ENCODE measurements at regions of chr7 and their contacts with region 1.

Region 1: GRCh38 chr7:116929914-116930913 is 23.1 kb upstream of the ST7 start:
- DNase-seq: peak; percentile 82
- ATAC-seq: peak; percentile 99
- H3K4me3 ChIP-seq: no peak overlapping the region
- H3K27ac ChIP-seq: no peak overlapping the region
- H3K4me1 ChIP-seq: no peaks in the 10 kb centered on the region
- H3K27me3 ChIP-seq: no peaks in the 10 kb centered on the region
- CTCF ChIP-seq: peak; percentile 92
- POLR2A ChIP-seq: 0 out of 2 replicates have a peak, but pooled peaks have one; percentile 30
- RAD21 ChIP-seq: peak; percentile 94

Region 2: DNA sequence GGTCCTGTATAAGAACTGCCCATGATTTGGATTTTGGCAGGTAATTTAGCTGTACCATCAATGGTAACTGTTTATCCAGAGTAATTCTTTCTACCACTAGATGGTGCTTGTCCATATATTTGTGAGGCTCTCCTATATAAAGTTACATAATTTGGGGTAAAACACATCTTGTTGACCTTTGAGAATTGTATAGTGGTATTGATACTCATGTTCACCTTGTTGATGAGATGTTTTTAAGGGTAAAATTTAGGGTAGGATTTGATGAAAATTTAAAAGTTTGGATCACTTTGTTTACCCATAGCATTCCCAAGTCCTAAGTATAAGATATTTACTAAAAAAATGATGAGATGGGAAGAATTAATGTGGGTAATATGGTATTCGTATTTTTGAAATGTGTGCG is 54.7 kb after region 1 on chr7:
- CTCF ChIA-PET with region 1: no interaction called
- POLR2A ChIA-PET with region 1: no interaction called
- dilution Hi-C with region 1: no loop called
- in situ Hi-C with region 1: no loop called
- intact Hi-C with region 1: loop called (anchors 2 kb)
- DNase-seq: peak; percentile 28
- ATAC-seq: peak; percentile 52
- H3K4me3 ChIP-seq: no peak overlapping the region
- H3K27ac ChIP-seq: no peak overlapping the region
- H3K4me1 ChIP-seq: peaks cover 2% of the 10 kb centered on the region
- H3K27me3 ChIP-seq: no peaks in the 10 kb centered on the region
- CTCF ChIP-seq: peak; percentile 66
- POLR2A ChIP-seq: no peak
- RAD21 ChIP-seq: peak; percentile 59

Region 3: GRCh38 chr7:117119192-117119924 is 189.1 kb after region 1 on chr7:
- CTCF ChIA-PET with region 1: interaction called, 3 read pairs
- POLR2A ChIA-PET with region 1: no interaction called
- dilution Hi-C with region 1: no loop called
- in situ Hi-C with region 1: loop called (anchors 5 kb)
- intact Hi-C with region 1: loop called (anchors 1 kb)
- DNase-seq: peak; percentile 81
- ATAC-seq: peak; percentile 75
- H3K4me3 ChIP-seq: no peak overlapping the region
- H3K27ac ChIP-seq: no peak overlapping the region
- H3K4me1 ChIP-seq: peaks cover 3% of the 10 kb centered on the region
- H3K27me3 ChIP-seq: no peaks in the 10 kb centered on the region
- CTCF ChIP-seq: peak; percentile 93
- POLR2A ChIP-seq: 0 out of 2 replicates have a peak, but pooled peaks have one; percentile 37
- RAD21 ChIP-seq: peak; percentile 95

Region 4: GRCh38 chr7:117127585-117128168 is 197.5 kb after region 1 on chr7:
- CTCF ChIA-PET with region 1: interaction called, 3 read pairs
- POLR2A ChIA-PET with region 1: no interaction called
- dilution Hi-C with region 1: no loop called
- in situ Hi-C with region 1: no loop called
- intact Hi-C with region 1: loop called (anchors 1 kb)
- DNase-seq: peak; percentile 72
- ATAC-seq: no peak
- H3K4me3 ChIP-seq: no peak overlapping the region
- H3K27ac ChIP-seq: no peak overlapping the region
- H3K4me1 ChIP-seq: peaks cover 12% of the 10 kb centered on the region
- H3K27me3 ChIP-seq: no peaks in the 10 kb centered on the region
- CTCF ChIP-seq: peak; percentile 75
- POLR2A ChIP-seq: no peak
- RAD21 ChIP-seq: peak; percentile 59

Region 5: DNA sequence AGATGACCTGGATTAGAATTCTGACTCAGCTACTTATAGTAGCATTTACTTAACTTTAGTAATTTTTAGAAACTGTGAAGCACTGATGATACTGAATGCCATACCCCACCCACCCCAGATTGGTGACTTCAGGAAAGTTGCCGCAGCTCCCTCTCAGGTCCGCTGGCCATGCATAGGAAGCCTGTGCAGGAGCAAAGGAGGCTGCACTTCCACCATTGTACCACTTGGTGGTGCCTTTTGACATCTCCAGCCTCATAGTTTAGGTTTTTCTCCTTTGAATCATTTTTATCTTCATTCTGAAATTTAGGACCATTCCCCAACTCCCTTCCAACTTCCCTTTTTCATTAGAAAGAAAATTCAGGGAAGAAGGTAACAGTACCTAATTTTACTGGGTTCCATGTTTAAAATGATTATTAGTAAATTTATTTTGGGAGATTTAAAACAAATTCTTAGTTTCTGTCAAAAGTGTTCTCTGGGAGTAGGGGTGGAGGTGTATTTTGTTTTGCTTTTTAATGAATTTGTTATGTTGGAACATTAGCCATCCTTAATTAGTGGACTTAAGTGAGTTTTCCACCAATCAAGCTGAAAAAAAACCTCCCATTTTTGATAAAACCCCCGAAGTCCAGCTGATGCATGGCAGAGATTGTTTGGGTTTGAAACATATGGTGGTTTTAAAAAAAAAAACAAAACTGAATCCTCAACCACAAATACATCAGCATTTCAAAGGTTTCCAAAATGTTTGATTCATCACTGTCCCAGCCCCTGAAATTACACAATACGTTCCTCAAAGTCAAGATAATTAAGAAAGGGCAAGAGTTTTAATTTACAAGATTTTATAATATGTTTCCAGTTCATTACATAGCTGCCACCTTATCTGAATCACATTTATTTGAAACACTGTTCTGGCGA is 283.0 kb after region 1 on chr7:
- CTCF ChIA-PET with region 1: no interaction called
- POLR2A ChIA-PET with region 1: no interaction called
- dilution Hi-C with region 1: no loop called
- in situ Hi-C with region 1: no loop called
- intact Hi-C with region 1: loop called (anchors 5 kb)
- DNase-seq: peak; percentile 75
- ATAC-seq: peak; percentile 84
- H3K4me3 ChIP-seq: no peak overlapping the region
- H3K27ac ChIP-seq: peak overlapping the region; percentile 60; the same call in 1 of the 2 replicates
- H3K4me1 ChIP-seq: peaks cover 5% of the 10 kb centered on the region
- H3K27me3 ChIP-seq: no peaks in the 10 kb centered on the region
- CTCF ChIP-seq: peak; percentile 91
- POLR2A ChIP-seq: no peak
- RAD21 ChIP-seq: peak; percentile 88

Region 6: DNA sequence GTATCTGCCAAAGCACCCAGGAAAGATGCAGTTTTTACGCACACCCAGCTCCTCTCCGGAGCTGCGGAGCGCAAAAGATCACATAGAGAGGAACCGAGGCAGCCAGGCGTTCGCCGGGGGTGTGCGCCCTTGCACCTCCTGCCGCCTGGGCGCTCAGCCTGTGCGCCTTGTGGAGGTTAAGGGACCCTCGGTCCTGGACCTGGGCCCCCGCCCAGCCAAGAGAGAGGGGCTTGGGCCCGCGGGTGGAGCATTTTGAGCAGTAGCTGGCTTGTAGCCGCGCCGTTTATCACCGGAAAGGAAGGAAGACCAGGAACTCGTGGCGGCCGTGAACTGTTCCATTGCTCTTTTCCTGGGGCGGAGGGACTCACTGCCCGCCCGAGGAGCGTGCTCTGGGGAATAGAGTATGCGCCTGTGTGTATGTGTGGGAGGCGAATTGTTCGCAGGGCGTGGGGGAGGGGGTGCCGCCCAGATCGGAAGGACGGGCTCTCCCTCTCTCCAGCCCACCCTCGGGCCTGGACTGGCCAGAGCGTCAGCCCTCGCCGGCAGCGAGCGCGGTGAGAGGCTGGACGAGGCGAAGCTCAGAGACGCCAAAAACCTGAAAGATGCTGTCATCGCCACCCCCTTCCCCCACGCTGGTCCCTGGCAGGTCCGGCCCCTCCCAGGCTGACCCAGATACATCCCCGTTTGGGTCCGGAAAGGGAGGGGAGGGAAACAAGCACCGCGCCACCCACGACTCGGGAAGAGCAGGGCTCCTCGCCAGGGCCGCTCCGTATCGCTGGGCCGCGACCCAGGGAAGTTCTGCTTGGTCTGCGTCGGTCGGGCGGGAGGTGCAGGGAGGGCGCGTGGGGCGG is 393.9 kb after region 1 on chr7:
- CTCF ChIA-PET with region 1: no interaction called
- POLR2A ChIA-PET with region 1: interaction called, 10 read pairs
- dilution Hi-C with region 1: no loop called
- in situ Hi-C with region 1: no loop called
- intact Hi-C with region 1: no loop called
- DNase-seq: peak; percentile 70
- ATAC-seq: peak; percentile 82
- H3K4me3 ChIP-seq: peak overlapping the region; percentile 21
- H3K27ac ChIP-seq: peak overlapping the region; percentile 8; the same call in 1 of the 2 replicates
- H3K4me1 ChIP-seq: peaks cover 7% of the 10 kb centered on the region; the same call in 1 of the 2 replicates
- H3K27me3 ChIP-seq: peaks cover 30% of the 10 kb centered on the region
- CTCF ChIP-seq: no peak
- POLR2A ChIP-seq: no peak
- RAD21 ChIP-seq: no peak

Region 7: GRCh38 chr7:117385340-117386109 is 455.3 kb after region 1 on chr7:
- CTCF ChIA-PET with region 1: no interaction called
- POLR2A ChIA-PET with region 1: no interaction called
- dilution Hi-C with region 1: no loop called
- in situ Hi-C with region 1: loop called (anchors 10 kb)
- intact Hi-C with region 1: loop called (anchors 2 kb)
- DNase-seq: peak; percentile 53
- ATAC-seq: peak; percentile 82
- H3K4me3 ChIP-seq: no peak overlapping the region
- H3K27ac ChIP-seq: peak overlapping the region; percentile 71; the same call in 1 of the 2 replicates
- H3K4me1 ChIP-seq: peaks cover 2% of the 10 kb centered on the region; the same call in 1 of the 2 replicates
- H3K27me3 ChIP-seq: no peaks in the 10 kb centered on the region
- CTCF ChIP-seq: peak; percentile 58
- POLR2A ChIP-seq: no peak
- RAD21 ChIP-seq: peak; percentile 64

Measured in IMR-90 (cell line).